ENCODE measurements at regions of chr12 and their contacts with region 1.

Region 1: GRCh38 chr12:39553471-39553870 is 66.1 kb downstream of the ABCD2 start:
- DNase-seq: no peak

Region 2: GRCh38 chr12:39116867-39117266 is 436.6 kb before region 1 on chr12:
- intact Hi-C with region 1: no loop called
- DNase-seq: no peak

Region 3: GRCh38 chr12:39581592-39581991 is 28.1 kb after region 1 on chr12:
- intact Hi-C with region 1: loop called in 1 of 2 experiments (anchors 1 kb)
- DNase-seq: no peak

Measured in posterior vena cava (tissue), 2 donors.